BJ (cell line): ENCODE measurements at regions of chr16 and their contacts with region 1.

Region 1: DNA sequence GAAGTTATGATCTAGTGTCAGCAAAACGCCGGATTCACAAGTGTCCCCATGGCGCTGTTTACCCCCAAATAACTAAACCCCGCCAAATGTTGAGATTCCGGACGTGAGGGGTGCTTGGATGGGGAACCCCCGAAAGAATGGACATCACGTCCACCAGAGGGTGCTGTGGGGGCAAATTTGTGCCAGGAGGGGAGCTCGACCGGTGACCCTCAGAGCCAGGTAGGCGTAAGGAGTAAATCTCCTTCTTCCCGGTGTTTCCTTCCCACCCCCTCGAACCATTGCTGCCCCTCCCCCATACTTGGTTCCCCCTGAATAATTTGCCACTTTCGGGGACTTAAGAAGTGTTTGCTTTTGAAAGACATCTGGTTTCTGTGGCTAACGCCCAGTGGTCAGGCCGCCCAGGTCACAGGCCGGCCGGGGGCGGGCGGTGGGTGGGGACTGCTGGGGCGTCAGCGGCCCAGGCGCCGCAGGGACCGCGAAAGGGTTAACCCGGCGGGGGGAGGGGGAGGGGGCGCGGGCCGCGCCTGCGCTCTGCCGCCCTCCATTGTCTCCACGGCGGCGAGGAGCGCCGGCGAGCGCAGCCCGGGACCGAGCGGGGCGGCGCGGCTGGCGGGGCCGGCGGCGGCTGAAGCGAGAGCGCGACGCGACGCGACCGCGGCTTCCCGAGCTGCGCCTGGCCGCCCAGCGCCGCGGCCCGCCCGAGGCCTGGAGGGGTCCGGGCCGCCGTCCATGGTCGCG is at the start of gene ZNRF1:
- DNase-seq: no peak
- H3K4me3 ChIP-seq: peak within 1 kb of the TSS; percentile 72
- H3K27me3 ChIP-seq: peaks cover 1% of the 10 kb centered on the region
- CTCF ChIP-seq: peak; percentile 71
- polyA plus RNA-seq, gene ZNRF1: 21.7 and 24.1 TPM in 2 replicates

Region 2: DNA sequence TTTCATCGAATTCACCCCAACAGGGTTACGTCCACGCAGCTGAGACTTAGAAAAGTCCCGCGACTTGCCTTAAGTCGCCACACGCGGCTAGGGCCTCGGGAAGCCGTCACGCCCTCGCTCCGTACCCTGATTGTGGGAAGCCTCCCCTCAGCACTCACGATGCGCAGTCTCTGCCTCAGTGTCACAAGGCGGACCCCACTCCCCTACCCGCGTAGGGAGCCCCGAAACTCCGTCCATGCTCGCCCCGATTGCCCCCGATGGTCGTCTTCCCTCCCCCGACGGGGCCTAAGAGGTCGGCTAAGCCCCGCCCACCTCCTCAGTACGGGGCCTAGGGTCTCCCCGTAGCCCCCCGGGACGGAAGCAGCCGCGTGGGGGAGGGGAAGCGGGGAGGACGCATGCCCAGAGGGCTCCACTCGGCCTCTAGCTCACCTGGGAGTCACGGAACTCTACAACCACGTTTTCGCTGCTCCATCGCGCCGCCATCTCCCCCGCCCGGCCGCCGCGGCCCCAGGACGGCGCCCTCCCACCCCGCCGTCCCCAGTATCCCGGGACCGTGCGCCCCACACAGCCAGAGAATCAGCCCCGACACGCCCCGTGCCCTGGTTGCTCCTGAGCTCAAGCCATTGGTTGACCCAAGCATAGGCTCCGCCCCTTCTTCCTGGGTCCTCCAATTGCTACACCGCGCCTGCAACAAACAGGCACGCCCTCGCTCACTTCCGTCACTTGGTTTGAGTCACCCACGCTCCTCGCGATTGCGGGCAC is 13.9 kb before region 1 on chr16 and contains the start of gene WDR59:
- CTCF ChIA-PET with region 1: interaction called, 22 read pairs
- POLR2A ChIA-PET with region 1: no interaction called
- DNase-seq: peak; percentile 95
- H3K4me3 ChIP-seq: peak within 1 kb of the TSS; percentile 94
- H3K27me3 ChIP-seq: no peaks in the 10 kb centered on the region
- CTCF ChIP-seq: no peak
- polyA plus RNA-seq, gene WDR59: 36.7 and 47.5 TPM in 2 replicates

Region 3: DNA sequence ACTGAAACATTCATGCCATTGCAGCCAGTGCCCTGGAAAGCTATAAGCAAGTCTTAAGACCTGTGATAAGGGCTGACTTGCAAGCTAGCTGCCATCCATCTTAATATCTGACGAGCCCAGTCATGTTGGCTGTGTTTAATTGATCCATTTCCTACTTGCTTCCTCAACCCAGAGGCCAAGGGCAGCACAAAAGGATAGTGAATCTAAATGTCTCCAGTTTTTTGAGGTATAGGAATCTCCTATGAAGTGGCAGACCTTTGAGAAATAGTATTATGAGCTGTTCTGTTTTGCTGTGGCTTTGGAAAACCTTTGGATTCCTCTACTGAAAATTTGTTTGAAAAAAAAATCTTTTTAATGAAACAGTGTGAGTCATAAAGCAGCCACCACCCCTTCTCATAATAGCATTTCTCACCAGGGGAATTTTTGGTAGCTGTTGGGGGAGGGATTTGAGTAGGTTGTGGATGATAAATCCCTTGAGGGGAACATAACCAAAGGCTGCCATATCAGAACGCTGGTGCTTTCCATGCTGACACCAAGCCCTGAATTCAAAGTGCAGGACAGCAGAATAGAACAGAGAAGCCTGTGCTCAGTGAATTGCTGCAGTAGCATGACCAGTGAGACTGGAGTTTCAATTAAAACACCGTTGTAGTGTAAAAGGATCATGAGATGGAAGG is 13.1 kb after region 1 on chr16:
- CTCF ChIA-PET with region 1: interaction called, 13 read pairs
- POLR2A ChIA-PET with region 1: no interaction called
- DNase-seq: peak; percentile 81
- H3K4me3 ChIP-seq: no peak overlapping the region
- H3K27me3 ChIP-seq: no peaks in the 10 kb centered on the region
- CTCF ChIP-seq: no peak

Region 4: GRCh38 chr16:75121949-75122568 is 123.4 kb after region 1 on chr16:
- CTCF ChIA-PET with region 1: interaction called, 13 read pairs
- POLR2A ChIA-PET with region 1: interaction called, 3 read pairs
- DNase-seq: no peak
- H3K4me3 ChIP-seq: no peak overlapping the region
- H3K27me3 ChIP-seq: no peaks in the 10 kb centered on the region
- CTCF ChIP-seq: no peak